HepG2 (cell line): ENCODE measurements at regions of chr14 and their contacts with region 1.

Region 1: GRCh38 chr14:94173885-94174603 is at the start of gene PPP4R4:
- DNase-seq: peak; percentile 89
- ATAC-seq: peak; percentile 83
- H3K4me3 ChIP-seq: peak within 1 kb of the TSS; percentile 84 to 86 (median 84)
- H3K27ac ChIP-seq: peak within 1 kb of the TSS; percentile 54
- H3K4me1 ChIP-seq: peaks cover 45% of the 10 kb centered on the region
- H3K27me3 ChIP-seq: peaks cover 0 to 7% of the 10 kb centered on the region in 2 experiments; a peak in 3 of 5 replicates
- CTCF ChIP-seq: no peak
- EP300 ChIP-seq: no peak
- POLR2A ChIP-seq: peak in 1 of 2 experiments; percentile 66; a peak in 2 of 4 replicates
- RAD21 ChIP-seq: 0 out of 2 replicates have a peak, but pooled peaks have one; percentile 12
- total RNA-seq, gene PPP4R4: 19.8 and 21.2 TPM in 2 replicates

Region 2: DNA sequence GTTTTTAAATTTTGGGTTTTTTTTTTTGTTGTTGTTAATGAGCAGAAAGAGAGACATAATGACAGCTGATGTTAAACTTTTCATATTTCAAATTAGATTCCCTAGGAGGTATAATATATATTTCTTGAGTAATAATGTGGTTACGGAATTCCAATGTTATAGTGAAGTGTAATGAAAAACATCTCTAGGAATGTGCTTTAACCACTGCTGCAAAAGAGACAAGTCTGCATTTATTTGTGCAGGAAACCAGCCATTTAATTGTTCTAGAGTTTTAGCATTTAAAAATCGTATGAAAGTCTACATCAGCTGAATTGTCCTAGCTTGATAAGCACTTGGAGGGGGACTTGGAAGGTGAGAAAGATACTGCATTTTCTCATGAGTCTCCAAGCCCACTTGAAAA is 104.7 kb after region 1 on chr14:
- CTCF ChIA-PET with region 1: no interaction called
- POLR2A ChIA-PET with region 1: interaction called, 13 read pairs
- in situ Hi-C with region 1: no loop called
- intact Hi-C with region 1: no loop called
- DNase-seq: no peak
- ATAC-seq: no peak
- H3K4me3 ChIP-seq: no peak overlapping the region
- H3K27ac ChIP-seq: no peak overlapping the region
- H3K4me1 ChIP-seq: peaks cover 21% of the 10 kb centered on the region
- H3K27me3 ChIP-seq: no peaks in the 10 kb centered on the region; a peak in 1 of 5 replicates
- CTCF ChIP-seq: no peak
- EP300 ChIP-seq: no peak
- POLR2A ChIP-seq: no peak
- RAD21 ChIP-seq: no peak

Region 3: GRCh38 chr14:94581127-94581999 is 407.3 kb after region 1 on chr14 and contains the start of gene SERPINA5:
- CTCF ChIA-PET with region 1: no interaction called
- POLR2A ChIA-PET with region 1: no interaction called
- in situ Hi-C with region 1: no loop called
- intact Hi-C with region 1: no loop called
- DNase-seq: peak; percentile 83
- ATAC-seq: peak; percentile 95
- H3K4me3 ChIP-seq: peak within 1 kb of the TSS; percentile 61 to 88 (median 75)
- H3K27ac ChIP-seq: peak within 1 kb of the TSS; percentile 88
- H3K4me1 ChIP-seq: peaks cover 75% of the 10 kb centered on the region
- H3K27me3 ChIP-seq: no peaks in the 10 kb centered on the region; a peak in 1 of 5 replicates
- CTCF ChIP-seq: peak; percentile 54
- EP300 ChIP-seq: peak in 1 of 2 experiments; percentile 46; a peak in 2 of 4 replicates
- POLR2A ChIP-seq: peak; percentile 83 to 92
- RAD21 ChIP-seq: peak; percentile 37; the same call in 1 of the 2 replicates
- total RNA-seq, gene SERPINA5: 237 and 498 TPM in 2 replicates